Posterior vena cava (tissue), 2 donors: ENCODE measurements at regions of chr9 and their contacts with region 1.

Region 1: DNA sequence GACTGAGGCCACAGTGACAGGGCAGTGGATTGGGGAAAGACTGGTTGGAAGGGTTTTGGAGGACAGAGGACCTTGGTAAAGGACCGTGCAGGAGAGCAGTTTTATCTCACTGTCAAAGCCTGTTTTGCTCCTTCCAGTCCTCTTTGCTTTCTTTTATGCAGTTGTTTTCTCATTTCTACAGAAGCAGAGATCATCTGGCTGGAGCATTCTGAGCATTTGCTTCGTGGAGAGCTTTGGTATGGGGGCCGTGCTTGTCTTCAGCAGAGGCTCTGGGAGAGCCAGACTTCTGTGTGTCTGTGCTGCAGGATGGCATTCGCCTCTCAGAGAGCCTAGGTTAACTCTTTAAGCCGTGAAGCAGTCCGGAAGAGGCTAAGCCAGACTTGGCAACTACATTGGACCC is 171.8 kb upstream of the TUT7 start:
- DNase-seq: no peak

Region 2: DNA sequence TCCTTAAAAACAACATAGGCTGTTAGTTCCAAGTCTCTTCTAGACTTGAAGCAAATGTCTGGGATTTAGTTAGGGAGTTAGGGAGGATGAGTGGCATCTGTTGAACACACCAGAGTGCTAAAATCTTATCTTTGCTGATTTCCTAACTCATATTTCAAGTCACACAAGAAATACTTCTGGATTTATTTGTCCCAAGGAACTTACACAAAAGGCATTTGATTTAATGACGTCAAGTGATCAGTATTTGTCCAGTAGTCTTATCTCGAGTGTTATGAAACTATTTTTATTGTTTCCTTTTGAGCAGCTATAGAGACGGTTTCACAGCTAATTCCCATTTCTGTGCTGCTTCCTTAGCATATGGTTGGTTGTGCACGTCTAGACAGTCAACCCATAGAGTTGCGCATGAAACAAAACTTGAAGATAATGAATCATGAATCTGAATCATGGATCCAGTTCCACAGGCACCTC is 31.3 kb before region 1 on chr9:
- intact Hi-C with region 1: no loop called
- DNase-seq: no peak

Region 3: DNA sequence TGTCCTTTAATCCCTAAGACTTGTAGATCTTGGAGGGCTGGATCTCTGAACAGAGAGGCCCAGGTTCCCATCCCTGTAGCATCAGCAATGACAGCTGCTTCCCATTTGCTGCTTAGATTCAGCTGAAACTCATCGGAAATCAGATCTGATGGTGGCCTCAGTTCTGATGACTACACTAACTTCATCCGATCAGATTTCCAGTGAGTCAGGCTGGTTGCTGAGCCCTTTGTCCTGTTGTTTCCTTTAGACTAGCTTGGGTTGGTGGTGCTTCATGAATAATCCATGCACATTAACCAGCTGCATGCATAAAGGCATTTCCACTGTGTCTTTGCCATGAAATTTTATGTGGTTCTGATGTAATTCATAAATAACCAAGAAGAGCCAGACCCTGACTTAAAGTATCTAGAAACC is 23.4 kb after region 1 on chr9:
- intact Hi-C with region 1: no loop called
- DNase-seq: no peak

Region 4: GRCh38 chr9:86563350-86563749 is 37.3 kb after region 1 on chr9:
- intact Hi-C with region 1: no loop called
- DNase-seq: no peak

Region 5: GRCh38 chr9:86734771-86735170 is 208.8 kb after region 1 on chr9:
- intact Hi-C with region 1: loop called in 1 of 2 experiments (anchors 2 kb)
- DNase-seq: no peak